Transverse colon (tissue), 4 donors: ENCODE measurements at regions of chr17 and their contacts with region 1.

Region 1: GRCh38 chr17:80920441-80920840 is 71.2 kb upstream of the CHMP6 start:
- DNase-seq: no peak
- H3K4me3 ChIP-seq: no peak overlapping the region
- H3K27ac ChIP-seq: no peak overlapping the region
- H3K4me1 ChIP-seq: no peaks in the 10 kb centered on the region
- H3K27me3 ChIP-seq: no peaks in the 10 kb centered on the region
- CTCF ChIP-seq: no peak
- EP300 ChIP-seq: no peak
- POLR2A ChIP-seq: no peak

Region 2: DNA sequence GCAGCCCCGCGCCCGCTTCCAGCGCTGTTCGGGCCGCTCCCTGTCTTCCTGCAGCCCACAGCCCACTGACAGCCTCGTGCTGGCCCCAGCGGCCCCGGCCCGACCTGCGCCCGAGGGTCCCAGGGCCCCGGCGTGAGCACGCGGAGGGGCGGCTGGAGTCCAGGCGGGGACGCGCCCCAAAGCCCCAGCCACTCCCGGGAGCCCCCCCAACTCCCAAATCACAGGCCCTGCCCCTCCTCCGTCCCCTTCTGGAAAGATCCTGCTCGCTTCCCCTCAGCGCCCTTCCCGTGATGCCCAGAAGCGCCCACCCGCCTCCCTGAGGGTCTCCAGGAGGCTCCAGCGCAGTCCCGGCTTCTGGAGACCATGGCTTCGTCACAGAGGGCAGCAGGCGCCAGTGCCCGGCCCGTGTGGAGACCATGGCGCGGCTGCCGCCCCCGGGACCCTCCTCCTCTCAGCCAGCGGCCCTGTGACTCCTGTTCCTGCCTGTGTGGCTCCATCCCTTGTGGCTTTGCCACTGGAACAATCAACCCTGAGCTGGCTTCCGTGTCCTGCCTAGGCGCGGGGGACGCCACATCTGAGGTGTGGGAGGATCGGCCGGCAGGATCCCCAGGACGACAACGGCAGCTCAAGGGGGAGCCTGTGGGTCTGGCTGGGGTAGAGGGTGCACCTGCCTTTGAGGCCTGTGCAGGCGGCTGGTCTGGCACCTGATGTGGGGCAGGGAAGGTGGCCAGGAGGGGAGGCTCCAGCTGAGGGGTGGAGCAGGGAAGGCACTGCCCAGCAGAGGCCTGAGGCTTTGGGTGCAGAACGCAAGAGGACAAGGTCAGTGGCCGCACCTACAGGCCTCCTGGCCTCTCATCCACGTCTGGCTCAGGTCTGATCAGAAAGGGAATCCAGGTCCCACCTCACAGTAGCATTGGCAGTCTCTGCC is 1455.2 kb after region 1 on chr17:
- in situ Hi-C with region 1: no loop called
- intact Hi-C with region 1: loop called (anchors 5 kb)
- DNase-seq: no peak
- H3K4me3 ChIP-seq: no peak overlapping the region
- H3K27ac ChIP-seq: no peak overlapping the region
- H3K4me1 ChIP-seq: peaks cover 8 to 25% (median 19%) of the 10 kb centered on the region in 4 donors
- H3K27me3 ChIP-seq: peaks cover 88% of the 10 kb centered on the region
- CTCF ChIP-seq: no peak
- EP300 ChIP-seq: no peak
- POLR2A ChIP-seq: no peak